T-cell (primary cell): ENCODE measurements at regions of chr12 and their contacts with region 1.

Region 1: DNA sequence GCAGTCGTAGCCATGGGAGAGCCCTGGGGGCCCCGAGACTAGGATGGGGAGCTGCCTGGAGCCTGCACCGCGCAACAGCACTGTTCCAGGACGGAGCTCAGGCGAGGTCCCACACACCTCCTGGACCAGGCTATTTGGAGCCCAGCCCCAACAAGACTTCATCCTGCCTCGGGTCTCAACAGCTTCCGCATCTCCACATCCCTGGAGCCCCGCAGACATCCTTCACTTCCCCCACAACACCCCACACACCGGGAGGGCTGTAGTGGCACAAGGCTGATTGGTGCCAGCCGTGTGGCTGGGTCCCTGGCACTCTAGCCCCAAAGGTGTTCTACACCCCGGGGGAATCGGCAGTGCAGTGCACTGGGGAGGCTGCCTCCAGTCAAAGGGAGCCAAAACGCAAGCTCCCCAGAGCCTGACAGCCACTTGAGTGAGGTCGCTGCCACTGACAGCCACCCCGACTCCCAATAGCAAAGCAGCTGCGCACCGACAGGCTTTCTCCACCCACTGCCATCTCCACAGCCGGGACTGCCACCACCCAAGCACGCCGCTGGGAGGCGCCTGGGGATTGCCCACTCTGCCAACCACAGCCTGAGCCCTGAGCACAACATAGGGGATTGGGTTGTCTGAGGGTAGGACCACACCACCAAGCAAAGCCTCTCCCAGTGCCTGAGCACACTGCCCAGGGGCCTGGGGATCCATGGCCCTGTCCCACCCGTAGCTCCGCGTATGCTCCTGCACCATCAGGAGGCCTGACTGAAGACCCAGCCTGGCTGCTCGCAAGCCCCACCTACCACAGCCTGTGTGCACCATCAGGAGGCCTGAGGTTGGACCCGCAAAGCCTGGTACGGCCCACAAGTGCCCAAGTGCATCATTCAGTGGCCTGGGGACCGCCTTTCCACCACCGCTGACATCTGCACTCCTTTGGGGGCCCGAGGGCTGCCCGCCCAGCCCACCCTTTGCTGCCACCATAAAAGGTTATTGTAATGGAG is 13.2 kb upstream of the KLRF1 start:
- DNase-seq: peak; percentile 82 to 95 (median 91)
- ATAC-seq: peak; percentile 96 to 98 (median 98)
- H3K4me3 ChIP-seq: peak overlapping the region; percentile 63 to 83
- H3K4me3 Mint-ChIP-seq: peak overlapping the region; percentile 82 to 90 (median 83)
- H3K27ac ChIP-seq: peak overlapping the region; percentile 61
- H3K27ac Mint-ChIP-seq: peak overlapping the region; percentile 74 to 85
- H3K4me1 ChIP-seq: peaks cover 8 to 15% of the 10 kb centered on the region in 2 experiments
- H3K4me1 Mint-ChIP-seq: peaks cover 10 to 15% (median 10%) of the 10 kb centered on the region in 3 donors
- H3K27me3 ChIP-seq: peaks cover 0 to 9% of the 10 kb centered on the region in 2 experiments
- H3K27me3 Mint-ChIP-seq: peaks cover 3 to 12% of the 10 kb centered on the region in 2 donors

Region 2: GRCh38 chr12:9687228-9687627 is 126.9 kb before region 1 on chr12:
- CTCF ChIA-PET with region 1: interaction called in 1 of 2 experiments, 19 read pairs
- POLR2A ChIA-PET with region 1: no interaction called
- DNase-seq: peak in 1 of 35 experiments; percentile 48
- ATAC-seq: peak in 1 of 4 experiments; percentile 29
- H3K4me3 ChIP-seq: no peak overlapping the region
- H3K4me3 Mint-ChIP-seq: peak overlapping the region in 1 of 3 donors; percentile 42
- H3K27ac ChIP-seq: peak overlapping the region; percentile 39
- H3K27ac Mint-ChIP-seq: peak overlapping the region; percentile 72 to 80
- H3K4me1 ChIP-seq: peaks cover 8 to 38% of the 10 kb centered on the region in 2 experiments
- H3K4me1 Mint-ChIP-seq: peaks cover 65 to 69% (median 67%) of the 10 kb centered on the region in 3 donors
- H3K27me3 ChIP-seq: no peaks in the 10 kb centered on the region
- H3K27me3 Mint-ChIP-seq: no peaks in the 10 kb centered on the region

Region 3: GRCh38 chr12:9869307-9870161 is 55.4 kb after region 1 on chr12 and contains the start of gene CLEC2B:
- CTCF ChIA-PET with region 1: interaction called, 3 to 11 read pairs
- POLR2A ChIA-PET with region 1: interaction called in 1 of 2 experiments, 3 read pairs
- DNase-seq: peak in 12 of 35 experiments; percentile 11 to 75 (median 20)
- ATAC-seq: peak; percentile 71 to 72 (median 72)
- H3K4me3 ChIP-seq: peak within 1 kb of the TSS; percentile 56 to 59
- H3K4me3 Mint-ChIP-seq: peak within 1 kb of the TSS; percentile 89 to 96 (median 93)
- H3K27ac ChIP-seq: peak within 1 kb of the TSS; percentile 96
- H3K27ac Mint-ChIP-seq: peak within 1 kb of the TSS; percentile 99
- H3K4me1 ChIP-seq: peaks cover 7 to 17% of the 10 kb centered on the region in 2 experiments
- H3K4me1 Mint-ChIP-seq: peaks cover 25 to 48% (median 30%) of the 10 kb centered on the region in 3 donors
- H3K27me3 ChIP-seq: no peaks in the 10 kb centered on the region
- H3K27me3 Mint-ChIP-seq: no peaks in the 10 kb centered on the region
- total RNA-seq, gene CLEC2B: 60.0 to 101 (median 74.7) TPM

Region 4: DNA sequence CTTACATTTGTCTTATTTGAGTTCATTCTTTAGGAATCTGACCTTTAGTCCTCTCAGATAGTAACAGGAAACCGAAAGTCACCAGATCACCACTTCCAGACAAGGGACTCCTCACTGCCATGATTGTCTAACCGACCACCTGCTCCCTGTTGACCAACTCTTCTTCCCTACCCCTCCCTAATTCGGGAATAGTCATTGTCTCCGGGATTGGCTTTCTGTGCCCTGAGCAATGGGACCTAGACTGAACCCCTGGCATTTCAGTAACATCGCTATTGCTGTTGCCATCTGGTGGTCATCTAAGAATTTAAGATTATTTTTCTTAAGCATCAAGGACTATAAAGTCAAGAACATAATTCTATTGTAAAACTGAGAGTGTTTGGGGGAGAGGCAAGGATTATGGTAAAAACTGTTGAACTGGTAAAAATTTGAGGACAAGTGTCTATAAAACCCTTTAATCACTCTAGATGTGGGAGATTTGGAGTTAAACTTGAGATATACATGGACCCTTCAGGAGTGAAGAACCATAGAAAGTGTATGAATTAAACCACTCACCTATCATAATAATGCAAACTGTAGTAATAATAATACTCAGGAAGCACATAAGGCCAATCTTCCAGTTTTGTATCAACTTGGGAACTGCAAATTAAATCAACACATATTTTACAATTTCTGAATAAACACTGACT is 111.7 kb after region 1 on chr12:
- CTCF ChIA-PET with region 1: interaction called, 8 to 20 read pairs
- POLR2A ChIA-PET with region 1: no interaction called
- DNase-seq: peak in 11 of 35 experiments; percentile 2 to 68 (median 15)
- ATAC-seq: peak in 3 of 4 experiments; percentile 48 to 66 (median 63)
- H3K4me3 ChIP-seq: peak overlapping the region; percentile 16 to 38
- H3K4me3 Mint-ChIP-seq: peak overlapping the region; percentile 47 to 72 (median 60)
- H3K27ac ChIP-seq: no peak overlapping the region
- H3K27ac Mint-ChIP-seq: no peak overlapping the region
- H3K4me1 ChIP-seq: peaks cover 2 to 3% of the 10 kb centered on the region in 2 experiments
- H3K4me1 Mint-ChIP-seq: peaks cover 13 to 25% (median 15%) of the 10 kb centered on the region in 3 donors
- H3K27me3 ChIP-seq: no peaks in the 10 kb centered on the region
- H3K27me3 Mint-ChIP-seq: peaks cover 4 to 9% of the 10 kb centered on the region in 2 donors

Region 5: GRCh38 chr12:10140001-10140400 is 325.9 kb after region 1 on chr12:
- CTCF ChIA-PET with region 1: interaction called, 4 to 18 read pairs
- POLR2A ChIA-PET with region 1: no interaction called
- DNase-seq: peak in 32 of 35 experiments; percentile 8 to 71 (median 30)
- ATAC-seq: peak in 1 of 4 experiments; percentile 45
- H3K4me3 ChIP-seq: no peak overlapping the region
- H3K4me3 Mint-ChIP-seq: no peak overlapping the region
- H3K27ac ChIP-seq: no peak overlapping the region
- H3K27ac Mint-ChIP-seq: no peak overlapping the region
- H3K4me1 ChIP-seq: no peaks in the 10 kb centered on the region
- H3K4me1 Mint-ChIP-seq: no peaks in the 10 kb centered on the region
- H3K27me3 ChIP-seq: peaks cover 0 to 3% of the 10 kb centered on the region in 2 experiments
- H3K27me3 Mint-ChIP-seq: peaks cover 0 to 8% of the 10 kb centered on the region in 2 donors